IMR-90 (cell line): ENCODE measurements at regions of chr3 and their contacts with region 1.

Region 1: DNA sequence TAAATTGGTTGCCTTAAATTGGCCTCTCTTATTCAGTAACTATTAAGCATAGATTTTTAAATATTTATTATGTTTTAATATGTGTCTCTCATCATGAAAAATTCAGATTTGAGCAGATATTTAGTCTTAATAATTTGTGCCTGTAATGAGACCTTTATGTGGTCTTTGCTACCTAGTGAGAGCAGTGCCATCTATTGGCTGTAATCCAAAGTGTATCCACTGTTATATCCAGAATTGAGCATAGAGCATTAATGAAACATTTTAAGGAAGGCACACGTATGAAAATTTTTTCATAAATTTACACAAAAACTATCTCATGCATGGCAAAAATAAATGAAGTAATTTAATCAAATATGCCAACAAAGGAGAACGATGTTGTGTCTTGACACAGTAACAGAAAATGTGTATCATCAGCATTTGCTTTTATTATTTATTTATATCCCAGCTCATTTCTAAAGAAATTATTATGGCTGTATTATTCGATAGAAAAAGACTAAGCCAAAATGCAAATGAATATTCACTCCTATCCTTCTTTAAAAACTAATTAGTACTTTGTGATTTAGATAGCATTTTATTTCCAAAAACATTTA is 203.5 kb downstream of the RSRC1 start:
- DNase-seq: peak; percentile 7
- ATAC-seq: peak; percentile 49; the same call in 1 of the 2 replicates
- H3K4me3 ChIP-seq: no peak overlapping the region
- H3K27ac ChIP-seq: no peak overlapping the region
- H3K4me1 ChIP-seq: no peaks in the 10 kb centered on the region
- H3K27me3 ChIP-seq: no peaks in the 10 kb centered on the region
- CTCF ChIP-seq: peak; percentile 38
- POLR2A ChIP-seq: no peak
- RAD21 ChIP-seq: peak; percentile 55

Region 2: GRCh38 chr3:158097593-158098308 is 215.7 kb before region 1 on chr3:
- CTCF ChIA-PET with region 1: no interaction called
- POLR2A ChIA-PET with region 1: no interaction called
- dilution Hi-C with region 1: no loop called
- in situ Hi-C with region 1: no loop called
- intact Hi-C with region 1: loop called (anchors 5 kb)
- DNase-seq: peak; percentile 57
- ATAC-seq: peak; percentile 71
- H3K4me3 ChIP-seq: peak overlapping the region; percentile 56
- H3K27ac ChIP-seq: no peak overlapping the region
- H3K4me1 ChIP-seq: peaks cover 2% of the 10 kb centered on the region; the same call in 1 of the 2 replicates
- H3K27me3 ChIP-seq: peaks cover 64% of the 10 kb centered on the region
- CTCF ChIP-seq: no peak
- POLR2A ChIP-seq: no peak
- RAD21 ChIP-seq: no peak

Region 3: DNA sequence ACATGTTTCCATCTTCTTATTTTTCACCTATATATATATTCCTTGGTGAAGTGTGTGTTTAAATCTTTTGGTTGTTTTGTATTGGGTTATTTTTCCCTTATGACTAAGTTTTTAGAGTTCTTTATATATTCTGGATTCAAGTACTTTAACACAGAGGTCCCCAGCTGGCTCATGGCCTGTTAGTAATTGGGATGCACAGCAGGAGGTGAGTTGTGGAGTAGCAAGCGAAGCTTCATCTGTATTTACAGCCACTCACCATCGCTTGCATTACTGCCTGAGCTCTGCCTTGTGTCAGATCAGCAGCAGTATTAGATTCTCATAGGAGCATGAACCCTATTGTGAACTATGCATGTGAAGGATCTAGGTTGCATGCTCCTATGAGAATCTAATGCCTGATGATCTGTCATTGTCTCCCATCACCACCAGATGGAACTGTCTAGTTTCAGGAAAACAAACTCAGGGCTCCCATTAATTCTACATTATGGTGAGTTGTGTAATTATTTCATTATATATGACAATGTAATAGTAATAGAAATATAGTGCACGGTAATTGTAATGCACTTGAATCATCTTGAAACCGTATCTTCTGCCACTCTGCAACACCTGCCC is 52.0 kb before region 1 on chr3:
- CTCF ChIA-PET with region 1: no interaction called
- POLR2A ChIA-PET with region 1: no interaction called
- dilution Hi-C with region 1: no loop called
- in situ Hi-C with region 1: no loop called
- intact Hi-C with region 1: no loop called
- DNase-seq: no peak
- ATAC-seq: no peak
- H3K4me3 ChIP-seq: no peak overlapping the region
- H3K27ac ChIP-seq: no peak overlapping the region
- H3K4me1 ChIP-seq: no peaks in the 10 kb centered on the region
- H3K27me3 ChIP-seq: no peaks in the 10 kb centered on the region
- CTCF ChIP-seq: 0 out of 2 replicates have a peak, but pooled peaks have one; percentile 3
- POLR2A ChIP-seq: no peak
- RAD21 ChIP-seq: no peak

Region 4: GRCh38 chr3:158407844-158408517 is 94.5 kb after region 1 on chr3:
- CTCF ChIA-PET with region 1: no interaction called
- POLR2A ChIA-PET with region 1: no interaction called
- dilution Hi-C with region 1: no loop called
- in situ Hi-C with region 1: no loop called
- intact Hi-C with region 1: no loop called
- DNase-seq: no peak
- ATAC-seq: no peak
- H3K4me3 ChIP-seq: no peak overlapping the region
- H3K27ac ChIP-seq: no peak overlapping the region
- H3K4me1 ChIP-seq: no peaks in the 10 kb centered on the region
- H3K27me3 ChIP-seq: no peaks in the 10 kb centered on the region
- CTCF ChIP-seq: no peak
- POLR2A ChIP-seq: no peak
- RAD21 ChIP-seq: no peak

Region 5: DNA sequence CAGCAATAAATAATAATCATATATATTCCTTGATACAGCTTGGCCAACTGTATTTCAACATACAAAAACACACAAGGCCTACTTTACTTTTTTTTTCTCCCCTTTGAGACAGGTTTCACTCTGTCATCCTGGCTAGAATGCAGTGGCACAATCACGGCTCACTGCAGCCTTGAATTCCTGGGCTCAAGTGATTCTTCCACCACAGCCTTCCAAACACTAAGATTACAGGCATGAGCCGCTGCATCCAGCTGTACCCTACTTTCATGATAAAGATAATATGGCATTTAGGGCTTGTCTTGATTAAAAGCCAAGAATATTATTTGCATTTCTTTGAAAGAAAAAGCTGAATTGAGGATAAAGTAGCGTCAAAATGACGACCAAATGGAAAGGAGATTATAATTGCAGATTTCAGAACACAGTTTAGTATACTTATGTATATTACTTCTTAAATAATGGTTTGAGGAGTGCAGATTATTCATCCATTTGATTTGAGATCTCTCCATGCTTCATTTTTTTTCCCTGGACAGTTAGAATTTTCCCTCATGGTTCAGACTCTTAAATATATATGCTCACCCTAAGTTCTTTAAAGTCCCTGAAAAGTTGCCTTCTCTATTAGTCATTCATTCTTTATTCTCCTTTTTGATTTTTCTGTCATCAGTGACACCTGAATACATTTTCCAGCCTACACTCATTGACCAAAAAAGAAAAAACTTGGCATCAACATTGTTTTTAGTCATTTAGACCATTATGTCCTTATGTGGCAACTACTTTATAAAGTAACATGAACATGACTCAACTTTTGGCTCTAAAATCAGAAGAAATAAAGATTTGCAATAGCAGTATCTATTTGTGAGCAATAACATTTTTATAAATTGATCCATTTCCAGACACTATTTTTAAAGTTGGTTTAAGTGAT is 209.0 kb after region 1 on chr3:
- CTCF ChIA-PET with region 1: no interaction called
- POLR2A ChIA-PET with region 1: no interaction called
- dilution Hi-C with region 1: no loop called
- in situ Hi-C with region 1: no loop called
- intact Hi-C with region 1: loop called (anchors 10 kb)
- DNase-seq: peak; percentile 69
- ATAC-seq: no peak; the same call in 1 of the 2 replicates
- H3K4me3 ChIP-seq: no peak overlapping the region
- H3K27ac ChIP-seq: no peak overlapping the region
- H3K4me1 ChIP-seq: peaks cover 3% of the 10 kb centered on the region
- H3K27me3 ChIP-seq: no peaks in the 10 kb centered on the region
- CTCF ChIP-seq: no peak
- POLR2A ChIP-seq: no peak
- RAD21 ChIP-seq: no peak